H1 (cell line): ENCODE measurements at regions of chr5 and their contacts with region 1.

Region 1: DNA sequence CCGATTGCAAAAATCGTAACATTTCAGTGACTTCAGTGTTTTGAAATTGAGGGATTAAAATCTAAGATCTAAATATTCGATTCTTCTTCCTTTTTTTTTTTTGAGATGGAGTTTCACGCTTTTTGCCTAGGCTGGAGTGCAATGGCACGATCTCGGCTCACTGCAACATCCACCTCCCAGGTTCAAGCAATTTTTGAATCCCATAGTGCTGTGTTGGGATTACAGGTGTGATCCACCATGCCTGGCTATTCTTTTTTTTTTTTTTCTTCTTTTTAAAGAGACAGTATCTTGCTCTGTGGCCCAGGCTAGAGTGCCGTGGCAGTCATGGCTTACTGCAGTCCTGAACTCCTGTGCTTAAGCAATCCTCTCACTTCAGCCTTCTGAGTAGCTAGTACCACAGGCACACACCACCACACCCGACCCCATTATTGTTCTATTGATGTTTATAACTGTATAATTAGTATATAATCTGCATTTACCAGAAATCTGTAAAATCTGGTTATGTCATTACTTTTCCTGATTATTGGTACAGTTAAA is 42.7 kb downstream of the NSD1 start:
- DNase-seq: no peak
- H3K4me3 ChIP-seq: no peak overlapping the region
- H3K27ac ChIP-seq: no peak overlapping the region
- H3K4me1 ChIP-seq: no peaks in the 10 kb centered on the region
- H3K27me3 ChIP-seq: no peaks in the 10 kb centered on the region
- CTCF ChIP-seq: no peak
- EP300 ChIP-seq: no peak
- POLR2A ChIP-seq: no peak
- RAD21 ChIP-seq: no peak

Region 2: GRCh38 chr5:177006265-177006972 is 169.8 kb before region 1 on chr5 and contains the start of gene UIMC1:
- CTCF ChIA-PET with region 1: no interaction called
- POLR2A ChIA-PET with region 1: no interaction called
- DNase-seq: peak; percentile 83 to 99
- H3K4me3 ChIP-seq: peak within 1 kb of the TSS; percentile 72 to 85 (median 80)
- H3K27ac ChIP-seq: peak within 1 kb of the TSS; percentile 89
- H3K4me1 ChIP-seq: peaks cover 0 to 3% (median 3%) of the 10 kb centered on the region in 4 experiments; a peak in 4 of 7 replicates
- H3K27me3 ChIP-seq: no peaks in the 10 kb centered on the region
- CTCF ChIP-seq: no peak
- EP300 ChIP-seq: peak in 1 of 2 experiments; percentile 100; a peak in 2 of 3 replicates
- POLR2A ChIP-seq: peak; percentile 49 to 52; a peak in 2 of 3 replicates
- RAD21 ChIP-seq: no peak; a peak in 1 of 4 replicates
- total RNA-seq, gene UIMC1: 43.0 and 43.7 TPM in 2 replicates

Region 3: DNA sequence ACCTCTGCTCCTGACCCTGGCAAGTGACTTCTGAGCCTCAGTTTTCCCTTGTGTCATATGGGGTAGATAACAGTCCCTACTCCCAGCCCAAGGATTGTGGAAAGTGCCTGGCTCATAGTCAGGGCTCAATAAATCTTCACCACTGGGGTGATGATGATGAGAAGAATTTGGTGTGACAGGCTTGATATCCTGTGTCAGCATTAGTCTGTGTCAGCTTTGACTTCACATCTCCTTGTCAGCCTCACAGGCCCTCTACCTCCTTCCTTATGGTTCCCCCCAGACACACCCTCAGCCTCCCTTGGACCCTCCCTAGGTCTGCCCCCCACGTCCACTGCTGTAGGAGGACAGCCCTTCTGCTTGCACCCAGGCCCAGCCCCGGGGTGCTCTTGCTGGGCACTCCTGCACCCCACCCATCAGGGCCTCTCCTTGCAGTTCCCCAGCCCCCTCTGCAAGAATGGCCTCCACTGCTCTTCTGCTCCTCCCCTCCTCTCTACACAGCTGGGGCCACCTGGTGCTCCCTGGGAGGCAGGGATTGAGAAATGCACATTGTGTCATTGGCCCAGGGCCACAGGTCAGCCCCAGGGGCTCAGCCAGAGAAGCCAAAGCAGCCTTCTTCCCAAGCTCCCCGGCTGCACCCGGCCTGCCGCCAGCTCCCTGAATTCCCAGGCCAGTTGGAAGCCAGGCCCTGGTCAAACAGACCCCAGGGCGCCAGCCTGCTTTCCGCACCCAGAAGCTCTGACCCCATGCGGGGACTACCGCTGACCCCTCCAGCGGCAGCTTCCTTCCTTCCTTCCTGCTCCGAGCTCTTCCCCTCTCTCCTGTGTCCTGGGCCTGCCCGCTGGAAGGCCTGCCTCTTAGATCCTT is 81.8 kb before region 1 on chr5:
- CTCF ChIA-PET with region 1: no interaction called
- POLR2A ChIA-PET with region 1: no interaction called
- DNase-seq: no peak
- H3K4me3 ChIP-seq: no peak overlapping the region
- H3K27ac ChIP-seq: no peak overlapping the region
- H3K4me1 ChIP-seq: peaks cover 0 to 11% (median 8%) of the 10 kb centered on the region in 4 experiments; a peak in 4 of 7 replicates
- H3K27me3 ChIP-seq: no peaks in the 10 kb centered on the region
- CTCF ChIP-seq: no peak
- EP300 ChIP-seq: no peak
- POLR2A ChIP-seq: no peak
- RAD21 ChIP-seq: no peak

Region 4: GRCh38 chr5:177124486-177124991 is 51.7 kb before region 1 on chr5:
- CTCF ChIA-PET with region 1: no interaction called
- POLR2A ChIA-PET with region 1: no interaction called
- DNase-seq: no peak
- H3K4me3 ChIP-seq: no peak overlapping the region
- H3K27ac ChIP-seq: no peak overlapping the region
- H3K4me1 ChIP-seq: peaks cover 0 to 2% (median under 1%) of the 10 kb centered on the region in 4 experiments; a peak in 2 of 7 replicates
- H3K27me3 ChIP-seq: no peaks in the 10 kb centered on the region
- CTCF ChIP-seq: no peak
- EP300 ChIP-seq: no peak
- POLR2A ChIP-seq: no peak
- RAD21 ChIP-seq: no peak

Region 5: GRCh38 chr5:177154003-177154643 is 22.1 kb before region 1 on chr5:
- CTCF ChIA-PET with region 1: no interaction called
- POLR2A ChIA-PET with region 1: interaction called, 11 read pairs
- DNase-seq: no peak
- H3K4me3 ChIP-seq: no peak overlapping the region
- H3K27ac ChIP-seq: no peak overlapping the region
- H3K4me1 ChIP-seq: no peaks in the 10 kb centered on the region
- H3K27me3 ChIP-seq: no peaks in the 10 kb centered on the region
- CTCF ChIP-seq: no peak
- EP300 ChIP-seq: no peak
- POLR2A ChIP-seq: no peak
- RAD21 ChIP-seq: no peak

Region 6: GRCh38 chr5:177162379-177162778 is 13.9 kb before region 1 on chr5:
- CTCF ChIA-PET with region 1: no interaction called
- POLR2A ChIA-PET with region 1: interaction called, 16 read pairs
- DNase-seq: no peak
- H3K4me3 ChIP-seq: no peak overlapping the region
- H3K27ac ChIP-seq: no peak overlapping the region
- H3K4me1 ChIP-seq: no peaks in the 10 kb centered on the region
- H3K27me3 ChIP-seq: no peaks in the 10 kb centered on the region
- CTCF ChIP-seq: no peak
- EP300 ChIP-seq: no peak
- POLR2A ChIP-seq: no peak
- RAD21 ChIP-seq: no peak